Dorsolateral prefrontal cortex (tissue), 120 donors: ENCODE measurements at regions of chr14 and their contacts with region 1.

Region 1: DNA sequence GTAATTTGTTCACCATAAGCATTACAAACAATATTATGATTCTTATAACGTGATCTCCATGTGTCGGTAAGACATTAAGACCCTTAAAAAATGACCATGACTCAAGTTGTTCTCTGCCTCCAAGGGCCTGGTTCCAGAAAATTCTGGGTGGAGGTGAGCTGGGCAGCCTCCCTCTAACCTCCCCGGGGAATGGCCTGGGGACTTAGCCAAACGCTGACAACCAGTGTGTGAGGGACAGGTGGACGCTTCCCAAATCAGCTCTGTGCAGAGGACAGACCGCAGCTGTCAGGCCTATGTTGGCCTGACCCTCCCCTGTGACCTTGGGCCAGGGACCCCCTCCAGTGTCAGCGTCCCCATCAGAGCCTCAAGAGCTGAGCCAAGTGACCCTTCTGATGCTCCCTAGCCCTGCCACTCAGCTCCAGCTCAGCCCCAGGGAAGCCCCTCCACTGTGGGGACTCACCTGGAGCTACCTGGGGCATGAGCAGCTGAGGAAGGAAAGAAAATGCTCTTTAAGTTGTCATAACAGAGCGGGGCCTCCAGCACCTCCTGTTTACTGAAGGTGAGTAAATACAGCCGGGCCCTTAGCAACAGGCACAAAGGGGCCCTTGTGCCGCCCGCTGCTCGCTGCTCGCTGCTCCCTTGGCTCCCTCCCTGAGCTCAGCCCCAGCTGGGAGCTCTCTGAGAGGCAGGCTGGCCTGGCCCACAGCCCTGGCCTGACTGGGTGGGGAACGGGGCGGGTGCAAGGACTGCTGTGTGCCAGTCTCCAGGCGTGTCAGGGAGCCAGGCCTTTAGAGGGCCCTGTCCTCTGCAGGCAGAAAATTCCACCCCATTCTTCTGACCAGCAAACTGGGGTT is 116.6 kb downstream of the CALM1 start:
- DNase-seq: peak; percentile 59 to 98 (median 97)
- H3K4me3 ChIP-seq: peak overlapping the region in 7 of 59 donors; percentile 17 to 47 (median 27)
- H3K27ac ChIP-seq: peak overlapping the region; percentile 88 to 100 (median 99)
- H3K27me3 ChIP-seq: no peaks in the 10 kb centered on the region
- CTCF ChIP-seq: peak in 44 of 56 donors; percentile 10 to 59 (median 34)

Region 2: DNA sequence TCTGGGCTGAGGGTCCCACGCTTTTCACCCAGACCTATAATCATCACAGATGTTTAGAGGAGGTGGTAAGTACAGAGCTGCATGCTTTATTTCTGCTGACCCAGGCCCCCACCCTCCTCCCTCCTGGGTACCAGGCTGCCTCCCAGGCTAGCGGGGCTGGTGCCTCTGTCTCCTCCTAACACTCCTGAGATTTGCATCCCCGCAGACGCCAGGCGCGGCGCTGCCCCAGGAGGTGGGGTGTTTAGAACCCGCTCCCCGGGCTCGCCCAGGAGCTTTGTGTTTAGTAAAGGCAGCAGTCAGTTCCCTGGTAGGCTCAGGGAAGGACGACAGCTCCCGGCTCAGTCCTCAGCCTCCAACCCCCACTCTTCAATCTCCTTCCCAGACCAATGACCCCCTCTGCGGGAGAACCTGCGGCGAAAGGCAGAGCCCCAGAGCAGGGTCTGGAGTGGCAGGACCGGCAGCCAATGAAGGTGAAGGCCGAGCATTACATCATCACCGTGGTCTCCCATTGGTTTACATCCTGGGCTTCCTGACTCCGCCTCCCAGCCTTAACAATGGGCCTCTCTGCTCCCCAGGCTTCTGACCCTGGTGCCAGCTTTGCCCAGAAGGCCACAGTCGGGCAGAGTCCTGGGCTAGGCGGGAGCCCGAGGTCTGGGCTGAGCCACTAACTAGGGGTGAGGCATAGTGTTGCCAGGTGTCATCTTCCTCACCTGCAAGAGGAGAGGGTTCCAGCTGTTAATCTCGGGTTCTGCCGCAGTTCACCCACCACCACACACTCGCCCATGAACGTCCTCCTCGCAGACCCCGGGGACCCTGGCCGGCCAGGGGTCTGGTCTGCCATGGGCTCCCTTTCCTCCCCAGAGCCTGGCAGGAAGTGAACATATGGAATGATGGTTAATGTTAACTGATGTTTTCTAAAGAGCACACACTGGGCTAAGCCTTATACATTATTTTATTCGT is 59.1 kb before region 1 on chr14:
- intact Hi-C with region 1: loop called (anchors 1 to 5 kb)
- DNase-seq: peak; percentile 95 to 99 (median 98)
- H3K4me3 ChIP-seq: peak overlapping the region; percentile 17 to 75 (median 55)
- H3K27ac ChIP-seq: peak overlapping the region; percentile 83 to 100 (median 98)
- H3K27me3 ChIP-seq: no peaks in the 10 kb centered on the region
- CTCF ChIP-seq: peak in 41 of 56 donors; percentile 3 to 64 (median 30)

Region 3: DNA sequence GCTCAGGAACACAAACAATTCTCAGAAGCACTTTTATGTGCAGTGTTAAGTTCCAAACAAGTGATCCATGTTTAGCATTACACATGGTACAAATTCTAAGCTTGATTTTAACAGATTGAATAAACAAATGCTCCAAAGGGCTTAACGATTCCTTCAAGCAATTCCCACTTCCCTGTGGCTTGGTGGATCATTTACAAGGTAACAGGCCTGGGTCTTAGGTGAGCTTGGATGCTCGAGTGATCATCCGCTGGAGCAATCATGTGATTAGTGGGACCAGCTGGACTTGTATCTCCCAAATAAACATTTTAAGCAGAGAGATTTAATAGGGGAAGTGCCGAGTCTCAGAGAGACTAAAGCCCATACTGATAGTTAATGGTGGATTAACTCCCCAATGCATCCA is 45.9 kb before region 1 on chr14:
- intact Hi-C with region 1: no loop called
- DNase-seq: no peak
- H3K4me3 ChIP-seq: no peak overlapping the region
- H3K27ac ChIP-seq: no peak overlapping the region
- H3K27me3 ChIP-seq: no peaks in the 10 kb centered on the region
- CTCF ChIP-seq: no peak

Region 4: GRCh38 chr14:90545966-90546751 is 32.8 kb after region 1 on chr14:
- intact Hi-C with region 1: loop called in 1 of 2 experiments (anchors 5 kb)
- DNase-seq: peak in 9 of 10 donors; percentile 32 to 78 (median 62)
- H3K4me3 ChIP-seq: no peak overlapping the region
- H3K27ac ChIP-seq: peak overlapping the region; percentile 74 to 98 (median 93)
- H3K27me3 ChIP-seq: no peaks in the 10 kb centered on the region
- CTCF ChIP-seq: peak in 14 of 56 donors; percentile 8 to 29 (median 14)

Region 5: DNA sequence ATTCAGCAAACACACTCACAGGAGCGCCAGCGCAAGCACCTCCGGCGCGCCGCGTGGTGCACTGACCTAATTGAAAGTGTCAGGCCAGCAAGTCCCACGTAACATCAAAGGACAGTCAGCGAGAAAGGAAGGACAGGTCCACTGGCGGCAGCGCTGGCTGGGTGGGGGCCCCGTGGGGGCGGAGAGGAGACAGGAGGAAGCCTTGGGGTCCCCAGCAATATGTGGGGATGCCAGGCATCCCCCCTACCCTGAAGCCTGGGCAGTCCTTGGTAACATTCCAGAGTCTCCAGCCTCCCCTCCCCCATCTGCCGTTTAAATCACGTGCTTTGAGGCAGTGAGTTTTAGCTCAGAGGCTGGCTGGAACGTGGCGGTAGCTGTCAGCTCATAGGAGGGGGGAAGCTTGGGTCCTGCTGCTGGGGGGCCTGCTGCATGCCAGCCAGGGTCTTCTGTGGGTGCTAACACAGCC is 42.7 kb after region 1 on chr14:
- intact Hi-C with region 1: loop called in 1 of 2 experiments (anchors 2 kb)
- DNase-seq: peak in 6 of 10 donors; percentile 41 to 81 (median 59)
- H3K4me3 ChIP-seq: peak overlapping the region in 51 of 59 donors; percentile 1 to 53 (median 33)
- H3K27ac ChIP-seq: peak overlapping the region; percentile 76 to 99 (median 96)
- H3K27me3 ChIP-seq: no peaks in the 10 kb centered on the region
- CTCF ChIP-seq: no peak

Region 6: GRCh38 chr14:90574188-90575131 is 61.1 kb after region 1 on chr14:
- intact Hi-C with region 1: loop called in 1 of 2 experiments (anchors 5 kb)
- DNase-seq: peak in 2 of 10 donors; percentile 40 to 61
- H3K4me3 ChIP-seq: no peak overlapping the region
- H3K27ac ChIP-seq: peak overlapping the region in 55 of 59 donors; percentile 12 to 98 (median 77)
- H3K27me3 ChIP-seq: no peaks in the 10 kb centered on the region
- CTCF ChIP-seq: no peak

Region 7: DNA sequence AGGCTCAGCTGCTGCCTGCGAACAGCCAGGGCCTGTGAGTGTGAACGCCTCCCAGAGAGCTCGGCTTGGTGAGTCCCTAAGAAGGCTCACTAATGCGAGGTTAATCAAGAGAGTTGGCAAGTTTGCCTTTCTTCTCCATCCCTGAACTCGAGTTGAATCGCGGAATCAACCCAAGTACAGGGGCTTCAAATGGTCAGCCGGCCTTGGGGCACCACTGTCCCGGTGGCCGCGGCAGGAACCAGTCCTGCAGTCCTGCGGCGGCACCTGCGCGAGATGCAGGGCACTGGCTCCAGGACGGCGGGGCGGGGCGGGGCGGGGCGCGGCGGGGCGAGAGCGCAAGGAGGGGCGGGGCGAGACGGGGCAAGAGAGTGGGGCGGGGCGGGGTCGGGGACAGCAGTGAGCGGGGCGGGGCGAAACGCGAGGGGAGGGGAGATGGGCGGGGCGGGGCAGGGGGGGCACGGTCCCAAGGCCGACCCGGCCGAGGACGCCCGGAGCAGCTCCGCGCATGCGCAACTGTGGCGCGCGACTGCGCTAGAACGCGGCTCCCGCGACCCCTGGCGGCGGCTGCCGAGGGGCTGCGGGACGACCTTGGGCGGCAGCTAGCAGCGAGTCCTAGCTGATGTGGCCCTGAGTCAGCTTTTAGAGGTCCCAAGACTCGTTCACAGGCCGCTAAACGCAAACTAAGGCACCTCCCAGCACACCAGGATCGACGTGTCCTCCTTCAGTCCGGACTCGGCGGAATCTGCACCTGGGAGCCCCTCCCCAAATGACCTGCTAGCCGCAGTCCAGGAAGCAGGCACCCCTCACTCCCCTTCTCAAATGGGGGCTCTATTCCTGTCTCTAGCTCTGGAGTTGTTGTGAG is 244.9 kb after region 1 on chr14:
- intact Hi-C with region 1: loop called in 1 of 2 experiments (anchors 5 kb)
- DNase-seq: peak; percentile 66 to 93 (median 80)
- H3K4me3 ChIP-seq: peak overlapping the region; percentile 39 to 80 (median 64)
- H3K27ac ChIP-seq: peak overlapping the region; percentile 87 to 100 (median 98)
- H3K27me3 ChIP-seq: no peaks in the 10 kb centered on the region
- CTCF ChIP-seq: peak; percentile 80 to 99 (median 96)